ENCODE measurements at regions of chr1 and their contacts with region 1.

Region 1: DNA sequence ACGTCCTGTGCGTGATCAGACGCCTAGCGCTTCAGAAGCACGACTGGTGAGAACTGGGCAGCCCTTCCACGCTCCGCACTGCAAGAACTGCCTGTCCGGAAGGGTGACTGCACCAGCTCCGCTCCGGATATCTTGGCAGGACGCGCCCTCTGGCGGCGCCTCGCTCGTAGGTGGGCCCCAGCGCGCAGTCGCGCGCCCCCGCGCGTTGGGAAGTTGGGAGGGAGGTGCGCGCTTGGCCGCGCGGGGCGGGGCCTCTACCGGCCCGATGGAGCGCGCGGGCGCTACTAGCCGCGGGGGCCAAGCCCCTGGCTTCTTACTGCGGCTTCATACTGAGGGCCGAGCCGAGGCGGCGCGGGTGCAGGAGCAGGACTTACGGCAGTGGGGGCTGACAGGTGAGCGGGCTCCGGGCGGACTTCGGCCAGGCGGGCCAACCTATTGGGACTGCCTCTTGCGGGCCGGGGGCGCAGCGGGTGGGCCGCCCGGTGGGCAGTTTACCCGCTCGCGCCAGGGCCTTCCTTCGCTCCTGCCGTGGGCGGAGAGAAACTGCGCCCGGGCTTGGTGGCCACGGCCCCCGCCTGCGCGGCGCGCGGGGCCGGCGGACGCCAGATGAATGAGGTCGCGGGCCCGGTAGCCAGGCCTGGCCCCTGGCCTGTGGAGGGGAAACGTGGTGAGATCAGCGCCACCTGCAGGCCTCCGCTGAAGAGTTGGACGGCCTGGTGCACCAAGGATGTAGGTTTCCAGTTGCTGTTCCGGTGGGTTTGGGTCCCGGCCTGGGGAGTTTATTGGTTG is at the start of gene CHD1L:
- DNase-seq: peak; percentile 57
- H3K4me3 ChIP-seq: peak within 1 kb of the TSS; percentile 96
- H3K27me3 ChIP-seq: no peaks in the 10 kb centered on the region
- CTCF ChIP-seq: peak; percentile 87
- polyA plus RNA-seq, gene CHD1L: 20.2 and 30.1 TPM in 2 replicates

Region 2: GRCh38 chr1:147172168-147172992 is 70.3 kb before region 1 on chr1 and contains the start of gene PRKAB2:
- CTCF ChIA-PET with region 1: interaction called, 28 read pairs
- POLR2A ChIA-PET with region 1: no interaction called
- DNase-seq: peak; percentile 80
- H3K4me3 ChIP-seq: peak within 1 kb of the TSS; percentile 91
- H3K27me3 ChIP-seq: no peaks in the 10 kb centered on the region
- CTCF ChIP-seq: peak; percentile 76
- polyA plus RNA-seq, gene PRKAB2: 18.3 and 29.3 TPM in 2 replicates

Region 3: GRCh38 chr1:147599362-147600118 is 356.9 kb after region 1 on chr1:
- CTCF ChIA-PET with region 1: no interaction called
- POLR2A ChIA-PET with region 1: no interaction called
- DNase-seq: peak; percentile 77
- H3K4me3 ChIP-seq: peak overlapping the region; percentile 68
- H3K27me3 ChIP-seq: no peaks in the 10 kb centered on the region
- CTCF ChIP-seq: no peak

Measured in BJ (cell line).